Colonic mucosa (tissue), 4 donors: ENCODE measurements at regions of chr17 and their contacts with region 1.

Region 1: GRCh38 chr17:71460943-71461342 is 659.9 kb upstream of the SOX9 start:
- DNase-seq: peak; percentile 46
- H3K4me3 ChIP-seq: no peak overlapping the region
- H3K27ac ChIP-seq: no peak overlapping the region
- H3K4me1 ChIP-seq: no peaks in the 10 kb centered on the region
- H3K27me3 ChIP-seq: no peaks in the 10 kb centered on the region
- CTCF ChIP-seq: peak; percentile 38

Region 2: DNA sequence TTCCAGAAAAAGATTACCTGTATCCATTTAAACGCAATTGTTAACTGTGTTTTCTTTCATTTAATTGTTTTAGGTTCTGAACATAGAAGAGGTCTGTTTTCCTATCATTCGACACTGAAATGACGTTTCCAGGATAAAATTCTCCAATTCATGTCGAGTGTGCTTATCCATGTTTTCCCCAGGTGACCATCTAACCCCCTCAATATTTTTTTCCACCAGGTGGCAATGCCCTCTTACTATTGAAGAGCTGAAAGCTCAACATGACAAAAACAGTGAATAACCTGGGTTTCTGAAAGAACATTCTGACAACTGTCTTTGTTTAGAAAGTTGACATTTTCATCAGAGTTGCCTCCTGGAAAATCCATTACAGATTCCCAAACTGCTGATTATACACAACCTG is 342.9 kb before region 1 on chr17:
- intact Hi-C with region 1: loop called (anchors 10 kb)
- DNase-seq: no peak
- H3K4me3 ChIP-seq: no peak overlapping the region
- H3K27ac ChIP-seq: no peak overlapping the region
- H3K4me1 ChIP-seq: no peaks in the 10 kb centered on the region
- H3K27me3 ChIP-seq: no peaks in the 10 kb centered on the region
- CTCF ChIP-seq: peak; percentile 13

Region 3: GRCh38 chr17:71237903-71238538 is 222.9 kb before region 1 on chr17:
- intact Hi-C with region 1: loop called (anchors 5 kb)
- DNase-seq: no peak
- H3K4me3 ChIP-seq: no peak overlapping the region
- H3K27ac ChIP-seq: no peak overlapping the region
- H3K4me1 ChIP-seq: no peaks in the 10 kb centered on the region
- H3K27me3 ChIP-seq: no peaks in the 10 kb centered on the region
- CTCF ChIP-seq: no peak

Region 4: GRCh38 chr17:71764505-71764904 is 303.6 kb after region 1 on chr17:
- intact Hi-C with region 1: loop called (anchors 10 kb)
- DNase-seq: peak; percentile 30
- H3K4me3 ChIP-seq: no peak overlapping the region
- H3K27ac ChIP-seq: no peak overlapping the region
- H3K4me1 ChIP-seq: no peaks in the 10 kb centered on the region
- H3K27me3 ChIP-seq: no peaks in the 10 kb centered on the region
- CTCF ChIP-seq: peak; percentile 26